IMR-90 (cell line): ENCODE measurements at regions of chr11 and their contacts with region 1.

Region 1: DNA sequence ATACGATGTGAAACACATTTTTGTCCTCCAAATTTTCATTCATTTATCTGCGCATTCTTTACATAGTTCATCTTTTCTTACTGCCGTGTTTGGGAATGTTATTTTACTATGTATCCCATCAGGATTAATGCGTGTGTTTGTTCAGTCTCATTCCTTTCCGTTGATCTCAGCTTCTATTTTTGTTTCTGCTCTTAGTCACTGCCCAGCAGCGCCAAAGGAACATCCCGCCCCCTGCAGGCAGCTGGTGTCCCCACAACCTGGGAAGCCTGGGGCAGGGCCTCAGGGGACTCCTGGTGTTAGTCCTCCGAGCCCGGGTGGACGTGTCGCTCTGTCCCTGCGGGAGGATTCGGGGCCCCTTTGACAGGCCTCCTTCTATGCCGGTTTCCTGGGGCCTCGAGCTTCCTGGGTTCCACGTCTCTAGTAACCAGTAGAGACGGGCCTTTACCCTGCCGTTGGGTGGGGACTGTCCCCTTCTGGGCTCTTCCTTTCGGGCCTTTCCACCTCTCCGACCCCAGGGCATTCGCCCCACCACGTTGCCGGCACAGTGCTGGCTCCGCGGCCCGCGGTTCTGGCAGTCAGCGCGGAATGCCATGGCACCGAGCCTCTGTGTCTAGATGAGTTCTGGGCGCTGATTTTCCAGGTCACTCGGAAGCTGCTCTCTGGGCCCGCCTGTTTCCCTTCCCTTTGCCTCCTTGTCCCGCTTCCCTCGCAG is 39.8 kb downstream of the WEE1 start:
- DNase-seq: peak; percentile 98
- ATAC-seq: peak; percentile 83
- H3K4me3 ChIP-seq: peak overlapping the region; percentile 7; the same call in 1 of the 2 replicates
- H3K27ac ChIP-seq: peak overlapping the region; percentile 91
- H3K4me1 ChIP-seq: peaks cover 16% of the 10 kb centered on the region
- H3K27me3 ChIP-seq: no peaks in the 10 kb centered on the region
- CTCF ChIP-seq: peak; percentile 98
- POLR2A ChIP-seq: peak; percentile 75
- RAD21 ChIP-seq: peak; percentile 79

Region 2: DNA sequence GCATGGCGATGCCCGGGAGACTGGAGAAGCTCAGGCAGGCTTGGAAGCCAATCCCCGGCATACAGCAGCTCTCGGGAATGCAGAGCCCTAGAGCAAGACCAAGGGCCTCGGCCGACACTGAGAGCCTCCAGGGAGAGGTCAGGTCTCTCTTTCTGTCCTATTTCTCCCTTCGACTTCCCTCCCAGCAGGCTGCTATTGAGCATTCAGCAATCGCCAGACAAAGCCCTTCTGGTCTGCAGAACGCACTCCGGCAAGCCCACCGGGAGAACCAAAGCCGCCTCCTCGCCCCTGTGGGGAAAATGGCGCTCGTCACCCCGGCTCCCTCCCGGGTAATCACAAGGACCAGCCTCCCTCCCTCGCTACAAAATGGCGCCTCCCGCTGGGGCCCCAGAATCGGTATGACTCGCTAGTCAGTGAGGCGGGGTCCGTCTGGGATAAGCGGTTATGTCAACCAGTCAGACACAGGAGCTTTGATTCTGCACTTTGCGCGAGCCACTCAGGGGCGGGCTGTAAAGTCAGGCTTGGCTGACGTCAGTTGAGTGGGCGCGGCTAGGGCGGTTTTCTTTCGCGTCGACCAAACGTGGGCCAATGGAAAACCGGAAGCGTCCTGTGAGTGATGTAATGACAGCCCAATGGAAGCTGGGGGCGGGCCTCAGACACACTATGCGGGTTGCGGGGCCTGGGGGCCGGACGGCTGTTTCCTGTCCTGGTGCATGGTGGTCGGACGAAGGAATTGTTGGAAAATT is 152.8 kb before region 1 on chr11 and contains the start of gene ZNF143:
- CTCF ChIA-PET with region 1: no interaction called
- POLR2A ChIA-PET with region 1: no interaction called
- dilution Hi-C with region 1: no loop called
- in situ Hi-C with region 1: no loop called
- intact Hi-C with region 1: loop called (anchors 5 kb)
- DNase-seq: peak; percentile 100
- ATAC-seq: peak; percentile 94
- H3K4me3 ChIP-seq: peak within 1 kb of the TSS; percentile 81
- H3K27ac ChIP-seq: peak within 1 kb of the TSS; percentile 95
- H3K4me1 ChIP-seq: no peaks in the 10 kb centered on the region
- H3K27me3 ChIP-seq: no peaks in the 10 kb centered on the region
- CTCF ChIP-seq: no peak
- POLR2A ChIP-seq: no peak; the same call in 1 of the 2 replicates
- RAD21 ChIP-seq: no peak
- total RNA-seq, gene ZNF143: 49.6 and 58.9 TPM in 2 replicates

Region 3: DNA sequence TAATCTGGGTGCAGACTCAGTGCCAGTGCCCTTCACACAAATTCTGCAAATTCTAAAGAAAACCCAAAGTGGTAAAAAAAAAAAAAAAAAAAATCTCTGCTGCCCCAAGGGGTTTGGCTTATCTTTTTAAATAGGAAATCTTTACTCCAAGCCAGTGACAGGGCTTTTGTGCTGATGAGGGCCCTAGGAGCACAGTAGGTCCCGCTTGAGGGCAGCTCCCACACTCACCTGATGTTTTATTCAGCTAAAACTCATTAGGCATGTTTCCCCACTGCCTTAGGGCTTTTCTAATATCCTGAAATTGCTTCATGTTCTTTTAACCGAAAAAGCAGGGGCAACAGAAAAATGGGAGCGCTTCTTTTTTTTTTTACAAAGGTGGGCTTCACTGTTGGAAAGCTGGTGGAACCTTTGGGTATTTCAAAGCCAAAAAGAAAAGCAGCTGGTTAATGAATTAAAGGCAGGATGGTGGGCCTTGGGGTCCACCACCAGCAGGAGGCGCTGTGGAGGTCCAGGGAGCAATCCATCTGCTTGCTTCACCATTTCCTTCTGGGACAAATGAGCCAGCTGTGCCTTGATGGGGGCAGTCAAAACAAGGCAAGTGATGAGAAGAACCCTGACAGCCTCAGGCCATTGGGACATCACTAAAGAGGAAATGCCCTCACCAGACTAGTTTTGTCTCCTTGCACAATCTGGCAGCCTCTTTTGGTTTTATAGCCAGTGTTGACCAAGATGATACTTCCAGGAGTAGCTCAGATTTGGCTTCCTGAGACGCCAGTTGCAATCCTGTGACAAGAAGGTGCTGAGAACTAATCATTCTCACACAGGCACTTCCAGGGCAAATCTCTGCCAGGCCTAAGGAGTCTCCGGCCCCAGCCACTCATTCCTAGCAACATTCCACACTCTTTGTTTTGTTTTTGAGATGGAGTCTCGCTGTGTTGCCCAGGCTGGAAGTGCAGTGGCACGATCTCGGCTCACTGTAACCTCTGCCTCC is 78.2 kb before region 1 on chr11:
- CTCF ChIA-PET with region 1: no interaction called
- POLR2A ChIA-PET with region 1: no interaction called
- dilution Hi-C with region 1: no loop called
- in situ Hi-C with region 1: no loop called
- intact Hi-C with region 1: loop called (anchors 2 kb)
- DNase-seq: peak; percentile 48
- ATAC-seq: peak; percentile 76
- H3K4me3 ChIP-seq: no peak overlapping the region
- H3K27ac ChIP-seq: peak overlapping the region; percentile 23; the same call in 1 of the 2 replicates
- H3K4me1 ChIP-seq: peaks cover 6% of the 10 kb centered on the region
- H3K27me3 ChIP-seq: no peaks in the 10 kb centered on the region
- CTCF ChIP-seq: peak; percentile 72
- POLR2A ChIP-seq: no peak
- RAD21 ChIP-seq: peak; percentile 55

Region 4: GRCh38 chr11:9573052-9573774 is 40.1 kb before region 1 on chr11 and contains the start of gene WEE1:
- CTCF ChIA-PET with region 1: interaction called, 4 read pairs
- POLR2A ChIA-PET with region 1: no interaction called
- dilution Hi-C with region 1: no loop called
- in situ Hi-C with region 1: no loop called
- intact Hi-C with region 1: loop called (anchors 1 kb)
- DNase-seq: peak; percentile 98
- ATAC-seq: peak; percentile 88
- H3K4me3 ChIP-seq: peak within 1 kb of the TSS; percentile 76
- H3K27ac ChIP-seq: peak within 1 kb of the TSS; percentile 94
- H3K4me1 ChIP-seq: no peaks in the 10 kb centered on the region
- H3K27me3 ChIP-seq: no peaks in the 10 kb centered on the region
- CTCF ChIP-seq: no peak
- POLR2A ChIP-seq: peak; percentile 91
- RAD21 ChIP-seq: no peak
- total RNA-seq, gene WEE1: 29.2 and 45.5 TPM in 2 replicates

Region 5: DNA sequence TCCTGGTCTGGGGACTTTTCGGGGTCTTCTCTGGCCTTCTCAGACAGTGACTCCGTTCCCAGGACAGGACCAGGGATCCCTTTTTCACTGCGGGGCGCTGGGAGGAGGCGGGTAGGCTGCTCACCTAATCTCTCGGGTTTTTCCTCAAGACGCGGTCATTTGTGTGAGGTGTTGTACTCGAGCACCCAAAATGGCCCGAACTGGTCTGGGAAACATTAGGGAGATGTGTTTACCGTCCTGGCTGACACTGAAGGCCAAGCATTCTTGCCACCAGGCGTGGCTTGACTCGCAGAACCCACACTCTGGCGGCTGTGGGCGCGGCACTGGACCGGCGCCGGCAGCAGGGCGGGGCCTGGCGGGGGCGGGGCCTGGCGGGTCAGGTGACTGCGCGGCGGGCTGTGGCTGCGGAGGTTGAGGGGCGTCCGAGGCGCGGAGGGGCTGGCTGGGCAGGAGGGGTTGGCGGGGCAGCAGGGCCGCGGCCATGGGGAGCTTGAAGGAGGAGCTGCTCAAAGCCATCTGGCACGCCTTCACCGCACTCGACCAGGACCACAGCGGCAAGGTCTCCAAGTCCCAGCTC is 50.5 kb after region 1 on chr11 and contains the start of gene SWAP70:
- CTCF ChIA-PET with region 1: no interaction called
- POLR2A ChIA-PET with region 1: no interaction called
- dilution Hi-C with region 1: no loop called
- in situ Hi-C with region 1: loop called (anchors 5 kb)
- intact Hi-C with region 1: loop called (anchors 5 kb)
- DNase-seq: peak; percentile 82
- ATAC-seq: peak; percentile 96
- H3K4me3 ChIP-seq: peak within 1 kb of the TSS; percentile 93
- H3K27ac ChIP-seq: peak within 1 kb of the TSS; percentile 92
- H3K4me1 ChIP-seq: peaks cover 3% of the 10 kb centered on the region; the same call in 1 of the 2 replicates
- H3K27me3 ChIP-seq: no peaks in the 10 kb centered on the region
- CTCF ChIP-seq: peak; percentile 52
- POLR2A ChIP-seq: peak; percentile 31; the same call in 1 of the 2 replicates
- RAD21 ChIP-seq: 0 out of 2 replicates have a peak, but pooled peaks have one; percentile 31
- total RNA-seq, gene SWAP70: 19.9 and 28.9 TPM in 2 replicates

Region 6: DNA sequence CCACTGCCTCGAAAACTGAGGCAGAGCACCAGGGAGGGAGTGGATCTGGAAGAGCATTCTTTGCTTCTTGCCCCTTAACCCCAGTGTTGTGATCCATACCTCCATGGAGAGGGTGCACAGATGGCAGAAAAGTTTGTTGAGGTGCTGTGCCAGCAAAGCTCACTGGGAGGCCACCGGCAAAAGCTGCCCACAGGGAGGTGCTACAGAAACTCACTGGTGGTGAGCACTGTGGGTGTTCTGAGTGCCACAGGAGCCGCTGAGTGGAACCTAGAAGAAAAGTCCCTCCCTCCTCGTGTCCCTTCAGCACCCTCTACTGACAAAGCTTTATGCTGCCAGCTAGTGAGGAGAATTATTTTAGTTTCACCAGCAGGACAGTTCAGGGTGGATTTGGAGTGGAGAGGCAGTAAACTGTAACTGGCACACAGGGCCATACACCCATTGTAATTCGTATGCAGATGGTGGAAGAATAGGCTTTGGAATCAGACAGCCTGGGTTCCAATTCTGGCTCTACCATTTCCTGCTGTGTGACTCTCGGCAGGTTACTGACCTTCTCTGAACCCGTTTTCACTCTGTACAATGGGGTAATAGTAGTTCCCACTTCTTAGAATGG is 135.2 kb after region 1 on chr11:
- CTCF ChIA-PET with region 1: interaction called, 6 read pairs
- POLR2A ChIA-PET with region 1: no interaction called
- dilution Hi-C with region 1: no loop called
- in situ Hi-C with region 1: loop called (anchors 10 kb)
- intact Hi-C with region 1: loop called (anchors 1 kb)
- DNase-seq: peak; percentile 79
- ATAC-seq: peak; percentile 86
- H3K4me3 ChIP-seq: no peak overlapping the region
- H3K27ac ChIP-seq: no peak overlapping the region
- H3K4me1 ChIP-seq: peaks cover 7% of the 10 kb centered on the region
- H3K27me3 ChIP-seq: no peaks in the 10 kb centered on the region
- CTCF ChIP-seq: peak; percentile 79
- POLR2A ChIP-seq: no peak
- RAD21 ChIP-seq: peak; percentile 88

Region 7: GRCh38 chr11:10322830-10323792 is 709.8 kb after region 1 on chr11:
- CTCF ChIA-PET with region 1: no interaction called
- POLR2A ChIA-PET with region 1: no interaction called
- dilution Hi-C with region 1: no loop called
- in situ Hi-C with region 1: loop called (anchors 25 kb)
- intact Hi-C with region 1: loop called (anchors 2 kb)
- DNase-seq: peak; percentile 93
- ATAC-seq: peak; percentile 50
- H3K4me3 ChIP-seq: no peak overlapping the region
- H3K27ac ChIP-seq: peak overlapping the region; percentile 48; the same call in 1 of the 2 replicates
- H3K4me1 ChIP-seq: peaks cover 38% of the 10 kb centered on the region
- H3K27me3 ChIP-seq: no peaks in the 10 kb centered on the region
- CTCF ChIP-seq: peak; percentile 68
- POLR2A ChIP-seq: no peak
- RAD21 ChIP-seq: peak; percentile 67